ENCODE measurements at regions of chr19 and their contacts with region 1.

Region 1: DNA sequence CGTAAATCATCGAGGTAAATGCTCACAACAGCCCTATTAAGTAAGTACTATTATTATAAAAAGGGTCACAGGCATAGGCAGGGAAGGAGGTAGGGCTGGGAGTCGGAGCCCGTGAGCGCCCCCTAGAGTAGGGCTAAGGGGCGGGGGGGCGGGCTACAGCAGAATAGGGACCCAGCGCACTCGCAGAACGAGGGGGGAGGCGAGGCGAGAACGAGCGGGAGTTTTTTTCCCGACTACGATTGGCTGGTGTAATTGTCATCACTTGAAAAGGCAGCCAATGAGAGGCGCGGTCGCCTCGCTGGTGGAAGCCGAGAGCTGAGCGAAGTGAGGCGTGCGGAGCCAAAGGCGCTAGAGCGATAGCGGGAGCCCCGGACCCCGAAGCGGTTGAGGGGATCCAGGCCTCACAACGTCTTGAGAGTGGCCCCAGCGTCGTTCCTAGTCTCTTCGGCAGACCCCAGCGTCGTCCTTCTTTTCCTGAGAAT is 24.2 kb downstream of the KEAP1 start:
- DNase-seq: peak; percentile 85 to 94
- ATAC-seq: peak; percentile 99 to 100
- H3K4me3 ChIP-seq: peak overlapping the region; percentile 53 to 70 (median 58)
- H3K27ac ChIP-seq: peak overlapping the region; percentile 46 to 63 (median 60)
- H3K4me1 ChIP-seq: peaks cover 5 to 11% of the 10 kb centered on the region in 2 donors
- H3K27me3 ChIP-seq: no peaks in the 10 kb centered on the region
- CTCF ChIP-seq: peak in 4 of 5 experiments; percentile 34 to 93 (median 64)
- POLR2A ChIP-seq: peak; percentile 48 to 51

Region 2: GRCh38 chr19:10416380-10417257 is 62.3 kb before region 1 on chr19:
- in situ Hi-C with region 1: loop called in 1 of 4 experiments (anchors 10 kb)
- intact Hi-C with region 1: no loop called
- DNase-seq: peak; percentile 53 to 87
- ATAC-seq: peak; percentile 78 to 86
- H3K4me3 ChIP-seq: peak overlapping the region; percentile 59 to 75 (median 69)
- H3K27ac ChIP-seq: peak overlapping the region; percentile 56 to 84 (median 62)
- H3K4me1 ChIP-seq: peaks cover 27 to 42% of the 10 kb centered on the region in 2 donors
- H3K27me3 ChIP-seq: peaks cover 44 to 49% (median 48%) of the 10 kb centered on the region in 3 donors
- CTCF ChIP-seq: peak; percentile 80 to 97 (median 89)
- POLR2A ChIP-seq: no peak

Region 3: GRCh38 chr19:10431943-10432735 is 46.8 kb before region 1 on chr19:
- in situ Hi-C with region 1: no loop called
- intact Hi-C with region 1: loop called (anchors 2 kb)
- DNase-seq: peak; percentile 64 to 92
- ATAC-seq: peak; percentile 40 to 56
- H3K4me3 ChIP-seq: peak overlapping the region; percentile 65 to 96 (median 67)
- H3K27ac ChIP-seq: peak overlapping the region; percentile 93 to 96 (median 94)
- H3K4me1 ChIP-seq: peaks cover 27 to 38% of the 10 kb centered on the region in 2 donors
- H3K27me3 ChIP-seq: no peaks in the 10 kb centered on the region
- CTCF ChIP-seq: no peak
- POLR2A ChIP-seq: peak; percentile 34 to 40